ENCODE measurements at regions of chr11 and their contacts with region 1.

Region 1: DNA sequence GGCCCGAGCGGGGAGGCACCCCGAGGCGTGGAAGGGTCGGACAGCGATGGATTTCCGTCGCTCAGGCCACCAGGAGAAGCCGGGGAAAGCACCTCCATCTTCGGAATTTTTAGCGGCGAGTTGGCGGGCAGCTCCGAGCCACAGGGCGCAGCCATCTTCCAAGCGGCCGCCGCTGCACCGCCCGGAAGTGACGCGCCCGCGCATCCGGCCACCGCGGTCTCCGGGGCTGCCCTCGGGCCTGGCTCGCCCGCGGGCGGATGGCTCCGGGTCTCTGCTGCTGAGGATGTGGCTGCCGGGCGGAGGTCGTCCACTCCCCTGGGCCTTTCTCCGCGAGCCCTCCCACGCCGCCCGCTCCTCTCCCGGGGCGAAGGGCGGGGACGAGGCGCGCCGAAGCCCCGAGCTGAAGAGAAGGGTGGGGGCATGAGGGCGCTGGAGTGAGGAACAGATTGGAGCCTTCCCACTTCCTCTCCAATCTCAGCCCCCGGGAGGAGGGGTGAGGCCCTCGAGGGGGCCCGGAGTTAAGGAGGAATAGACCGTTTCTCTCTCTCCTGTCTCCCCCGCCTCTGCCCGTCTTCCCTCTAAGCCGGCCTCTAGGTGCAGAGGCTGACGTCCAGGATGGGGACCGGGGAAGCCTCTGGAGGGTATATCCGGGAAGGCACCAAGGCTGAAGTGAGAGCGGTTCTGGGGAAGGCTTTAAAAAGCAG is at the start of gene MSANTD2:
- DNase-seq: peak; percentile 65 to 89 (median 73)
- ATAC-seq: peak; percentile 92
- H3K4me3 ChIP-seq: peak within 1 kb of the TSS; percentile 71
- H3K4me3 Mint-ChIP-seq: peak within 1 kb of the TSS; percentile 88 to 97 (median 96)
- H3K27ac ChIP-seq: peak within 1 kb of the TSS; percentile 93
- H3K27ac Mint-ChIP-seq: peak within 1 kb of the TSS; percentile 88 to 98 (median 94)
- H3K4me1 ChIP-seq: peaks cover 8 to 14% of the 10 kb centered on the region in 2 donors
- H3K4me1 Mint-ChIP-seq: peaks cover 13 to 38% (median 32%) of the 10 kb centered on the region in 7 donors
- H3K27me3 ChIP-seq: no peaks in the 10 kb centered on the region
- H3K27me3 Mint-ChIP-seq: peaks cover 0 to 24% (median 0%) of the 10 kb centered on the region in 5 donors
- total RNA-seq, gene MSANTD2: 9.1 to 29.5 (median 14.4) TPM

Region 2: DNA sequence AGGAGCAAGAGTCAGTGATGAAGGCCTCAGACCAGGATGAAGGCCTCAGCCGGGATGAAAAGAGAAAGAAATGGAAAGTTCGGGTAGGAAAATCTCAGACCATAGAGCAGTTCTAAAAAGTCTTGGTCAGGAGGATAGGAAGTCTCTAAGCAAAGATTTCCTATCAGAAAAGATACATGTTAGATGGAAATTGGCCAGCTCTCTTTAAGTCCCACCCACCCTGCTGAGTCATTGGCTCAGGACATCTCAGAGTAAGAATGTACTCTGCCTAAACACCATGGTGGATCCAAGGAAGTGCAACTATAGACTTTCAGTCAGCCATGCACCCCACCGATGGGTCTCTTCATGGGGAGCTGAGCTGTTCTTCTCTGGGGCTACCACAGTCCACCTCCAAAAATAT is 406.0 kb before region 1 on chr11:
- CTCF ChIA-PET with region 1: no interaction called
- POLR2A ChIA-PET with region 1: no interaction called
- intact Hi-C with region 1: no loop called
- DNase-seq: no peak
- ATAC-seq: no peak
- H3K4me3 ChIP-seq: no peak overlapping the region
- H3K4me3 Mint-ChIP-seq: no peak overlapping the region
- H3K27ac ChIP-seq: no peak overlapping the region
- H3K27ac Mint-ChIP-seq: no peak overlapping the region
- H3K4me1 ChIP-seq: no peaks in the 10 kb centered on the region
- H3K4me1 Mint-ChIP-seq: no peaks in the 10 kb centered on the region
- H3K27me3 ChIP-seq: peaks cover 0 to 6% of the 10 kb centered on the region in 2 donors
- H3K27me3 Mint-ChIP-seq: peaks cover 3 to 15% (median 10%) of the 10 kb centered on the region in 5 donors

Region 3: DNA sequence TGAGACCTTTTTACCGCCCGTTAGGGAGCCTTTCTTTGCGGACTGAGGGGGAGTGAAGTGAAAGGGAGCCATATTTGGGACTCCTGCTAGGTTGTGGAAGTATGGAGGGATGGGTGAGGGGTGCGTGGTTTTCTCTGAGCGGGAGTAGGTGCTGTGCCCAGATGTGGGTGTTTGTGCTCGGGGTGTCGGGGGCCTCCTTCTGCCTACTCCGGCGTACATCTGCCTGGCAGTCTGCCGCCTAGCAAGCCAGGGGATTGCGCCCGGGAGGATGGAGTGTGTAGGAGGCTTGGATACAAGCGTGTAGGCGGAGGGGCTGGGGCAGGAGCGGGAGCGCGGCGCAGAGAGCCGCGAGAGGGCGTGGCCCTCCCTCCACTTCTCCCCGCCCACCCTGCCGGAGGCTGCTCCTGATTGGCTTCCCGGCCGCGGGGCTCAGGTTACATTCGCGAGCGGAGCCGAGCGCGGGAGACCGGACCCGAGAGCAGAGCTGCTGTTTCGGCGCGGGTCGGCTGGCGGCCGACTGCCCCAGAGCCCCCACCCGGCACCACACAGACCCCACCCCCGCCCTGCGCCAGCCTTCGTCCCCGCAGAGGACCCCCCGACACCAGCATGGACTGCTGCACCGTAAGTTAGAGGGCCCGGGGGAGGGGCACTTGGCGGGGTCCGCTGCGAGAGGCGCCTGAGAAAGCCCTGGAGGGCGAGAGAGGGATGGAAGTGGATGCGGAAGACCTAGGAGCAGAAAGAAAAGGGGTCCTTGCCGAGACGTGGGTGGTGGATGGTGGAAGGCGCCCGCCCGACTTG is 60.7 kb before region 1 on chr11 and contains the start of gene NRGN:
- CTCF ChIA-PET with region 1: no interaction called
- POLR2A ChIA-PET with region 1: interaction called, 4 read pairs
- intact Hi-C with region 1: loop called in 1 of 2 experiments (anchors 1 kb)
- DNase-seq: peak; percentile 64 to 84 (median 77)
- ATAC-seq: peak; percentile 94
- H3K4me3 ChIP-seq: peak within 1 kb of the TSS; percentile 63
- H3K4me3 Mint-ChIP-seq: peak within 1 kb of the TSS; percentile 78 to 90 (median 86)
- H3K27ac ChIP-seq: peak within 1 kb of the TSS; percentile 38
- H3K27ac Mint-ChIP-seq: peak within 1 kb of the TSS in 8 of 9 donors; percentile 25 to 75 (median 56)
- H3K4me1 ChIP-seq: peaks cover 0 to 5% of the 10 kb centered on the region in 2 donors
- H3K4me1 Mint-ChIP-seq: peaks cover 18 to 33% (median 19%) of the 10 kb centered on the region in 7 donors
- H3K27me3 ChIP-seq: no peaks in the 10 kb centered on the region
- H3K27me3 Mint-ChIP-seq: peaks cover 0 to 65% (median 9%) of the 10 kb centered on the region in 5 donors
- total RNA-seq, gene NRGN: 1.2 to 48.7 (median 4.9) TPM

Region 4: DNA sequence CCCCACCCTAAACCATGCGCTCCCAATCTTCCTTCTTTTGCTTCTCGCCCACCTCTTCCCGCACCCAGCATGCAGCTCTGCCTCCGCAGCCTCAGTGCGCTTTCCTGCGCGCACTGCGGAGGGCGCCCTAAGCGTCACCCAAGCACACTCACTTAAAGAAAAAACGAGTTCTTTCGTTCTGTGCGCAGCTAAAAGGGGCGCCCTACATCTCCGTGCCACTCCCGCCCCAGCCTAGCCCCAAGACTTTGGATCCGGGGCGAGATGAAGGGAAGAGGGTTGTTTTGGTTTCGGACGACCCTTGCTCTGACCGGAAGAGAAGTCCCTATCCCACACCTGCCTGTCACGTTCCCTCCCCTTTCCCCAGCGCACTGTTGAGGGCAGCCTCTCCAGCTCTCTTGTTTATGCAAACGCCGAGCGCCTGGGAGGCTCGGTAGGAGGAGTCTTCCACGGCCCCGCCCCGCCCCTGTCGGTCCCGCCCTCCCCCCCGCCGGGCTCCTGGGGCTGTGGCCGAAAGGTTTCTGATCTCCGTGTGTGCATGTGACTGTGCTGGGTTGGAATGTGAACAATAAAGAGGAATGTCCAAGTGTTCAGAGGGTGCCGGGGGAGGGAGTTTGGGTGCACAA is 53.6 kb before region 1 on chr11:
- CTCF ChIA-PET with region 1: interaction called, 8 read pairs
- POLR2A ChIA-PET with region 1: interaction called, 13 read pairs
- intact Hi-C with region 1: loop called (anchors 1 to 2 kb)
- DNase-seq: peak; percentile 66 to 88 (median 85)
- ATAC-seq: peak; percentile 93
- H3K4me3 ChIP-seq: peak overlapping the region; percentile 99
- H3K4me3 Mint-ChIP-seq: peak overlapping the region; percentile 91 to 100 (median 98)
- H3K27ac ChIP-seq: peak overlapping the region; percentile 72
- H3K27ac Mint-ChIP-seq: peak overlapping the region; percentile 91 to 98 (median 96)
- H3K4me1 ChIP-seq: peaks cover 0 to 3% of the 10 kb centered on the region in 2 donors
- H3K4me1 Mint-ChIP-seq: peaks cover 4 to 37% (median 19%) of the 10 kb centered on the region in 7 donors
- H3K27me3 ChIP-seq: no peaks in the 10 kb centered on the region
- H3K27me3 Mint-ChIP-seq: peaks cover 0 to 22% (median 0%) of the 10 kb centered on the region in 5 donors

Region 5: DNA sequence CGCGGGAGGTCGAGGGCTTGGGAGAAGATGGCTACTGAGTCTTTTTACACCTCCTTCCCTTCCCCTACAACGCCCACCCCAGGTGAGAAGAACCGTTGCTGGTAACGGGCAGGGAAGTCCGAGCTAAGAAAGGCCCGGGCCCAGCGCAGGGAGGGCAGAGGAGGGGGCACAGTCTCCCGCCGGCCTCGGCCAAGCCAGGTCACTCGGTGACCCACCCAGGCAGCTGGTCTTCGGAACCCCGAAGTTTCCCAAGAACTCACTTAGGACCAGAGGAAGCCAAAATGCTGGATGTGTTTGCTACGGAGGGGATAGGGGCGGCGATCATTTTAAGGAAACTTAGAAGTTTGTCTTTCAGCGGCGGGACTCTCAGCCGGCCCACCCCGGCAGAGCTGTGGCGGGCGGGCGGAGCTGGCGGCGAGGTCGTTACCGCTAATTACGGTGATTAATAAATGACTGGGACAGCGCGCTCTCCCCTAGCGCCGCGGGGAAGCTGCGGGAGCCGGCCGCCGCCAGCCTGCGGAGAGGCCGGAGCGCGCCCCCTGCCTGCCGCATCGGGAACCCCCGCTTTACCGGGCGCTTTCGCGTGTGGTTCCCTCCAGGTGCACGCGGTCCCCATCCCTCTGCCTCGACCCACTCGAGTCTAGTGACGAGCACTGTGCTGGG is 65.7 kb after region 1 on chr11:
- CTCF ChIA-PET with region 1: no interaction called
- POLR2A ChIA-PET with region 1: no interaction called
- intact Hi-C with region 1: loop called in 1 of 2 experiments (anchors 2 kb)
- DNase-seq: peak in 8 of 9 donors; percentile 27 to 61 (median 46)
- ATAC-seq: peak; percentile 72
- H3K4me3 ChIP-seq: no peak overlapping the region
- H3K4me3 Mint-ChIP-seq: peak overlapping the region in 7 of 10 donors; percentile 37 to 68 (median 51)
- H3K27ac ChIP-seq: no peak overlapping the region
- H3K27ac Mint-ChIP-seq: peak overlapping the region in 1 of 9 donors; percentile 54
- H3K4me1 ChIP-seq: peaks cover 5 to 29% of the 10 kb centered on the region in 2 donors
- H3K4me1 Mint-ChIP-seq: peaks cover 7 to 67% (median 43%) of the 10 kb centered on the region in 7 donors
- H3K27me3 ChIP-seq: peaks cover 20 to 70% of the 10 kb centered on the region in 2 donors
- H3K27me3 Mint-ChIP-seq: peaks cover 80 to 97% (median 91%) of the 10 kb centered on the region in 5 donors